Activated CD4-positive, alpha-beta memory T cell treated with anti-CD3 and anti-CD28 coated beads for 36 hours (primary cell): ENCODE measurements at regions of chr3 and their contacts with region 1.

Region 1: GRCh38 chr3:45938864-45939263 is 4.4 kb upstream of the CXCR6 start:
- DNase-seq: peak; percentile 91
- H3K4me3 Mint-ChIP-seq: no peak overlapping the region
- H3K27ac Mint-ChIP-seq: no peak overlapping the region
- H3K4me1 Mint-ChIP-seq: peaks cover 34% of the 10 kb centered on the region
- H3K27me3 Mint-ChIP-seq: peaks cover 2% of the 10 kb centered on the region

Region 2: DNA sequence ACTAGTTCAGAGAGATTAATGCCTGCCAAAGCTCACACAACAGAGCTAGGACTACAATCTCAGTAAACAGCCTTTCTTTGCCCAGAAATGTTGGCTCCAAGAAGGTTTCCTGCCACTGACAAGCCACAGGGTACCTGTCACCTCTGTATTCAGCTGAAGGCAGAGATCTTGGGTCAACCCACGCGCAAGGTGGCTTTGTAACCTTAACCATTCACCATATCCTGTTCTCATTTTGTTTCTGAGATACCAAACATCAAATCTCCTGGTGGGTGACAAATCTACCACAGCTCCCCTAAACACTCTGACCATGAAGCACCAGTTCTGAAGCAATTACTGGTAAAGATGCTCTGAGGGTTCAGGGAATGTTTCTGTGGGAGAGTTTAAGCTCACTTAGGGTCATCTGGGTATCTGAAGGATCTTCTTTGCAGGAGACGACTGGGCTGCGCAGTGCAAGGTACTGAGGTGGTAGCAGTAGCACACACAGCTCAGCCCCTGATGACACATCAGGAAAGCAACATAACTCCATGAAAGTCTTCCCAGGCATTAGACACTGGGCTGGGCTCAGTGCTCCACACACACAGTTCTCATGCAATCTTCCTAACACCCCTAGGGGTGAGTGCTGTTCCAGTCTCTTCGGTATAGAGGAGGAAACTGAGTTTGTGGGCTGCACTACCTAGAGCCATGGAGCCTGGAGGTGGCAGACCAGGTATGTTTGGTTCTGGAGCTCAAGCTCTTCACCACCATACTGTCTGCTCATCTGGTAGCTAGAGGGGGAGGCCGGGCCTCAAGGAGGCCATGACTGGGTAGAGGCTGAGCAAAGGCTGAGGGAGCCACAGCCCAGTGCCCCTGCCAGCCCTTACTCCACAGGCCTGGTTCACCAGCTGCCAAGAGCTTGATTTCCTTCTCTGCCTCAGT is 12.1 kb after region 1 on chr3:
- CTCF ChIA-PET with region 1: interaction called, 21 read pairs
- POLR2A ChIA-PET with region 1: no interaction called
- intact Hi-C with region 1: no loop called
- DNase-seq: peak; percentile 85
- H3K4me3 Mint-ChIP-seq: no peak overlapping the region
- H3K27ac Mint-ChIP-seq: peak overlapping the region; percentile 77
- H3K4me1 Mint-ChIP-seq: peaks cover 50% of the 10 kb centered on the region
- H3K27me3 Mint-ChIP-seq: peaks cover under 1% of the 10 kb centered on the region

Region 3: DNA sequence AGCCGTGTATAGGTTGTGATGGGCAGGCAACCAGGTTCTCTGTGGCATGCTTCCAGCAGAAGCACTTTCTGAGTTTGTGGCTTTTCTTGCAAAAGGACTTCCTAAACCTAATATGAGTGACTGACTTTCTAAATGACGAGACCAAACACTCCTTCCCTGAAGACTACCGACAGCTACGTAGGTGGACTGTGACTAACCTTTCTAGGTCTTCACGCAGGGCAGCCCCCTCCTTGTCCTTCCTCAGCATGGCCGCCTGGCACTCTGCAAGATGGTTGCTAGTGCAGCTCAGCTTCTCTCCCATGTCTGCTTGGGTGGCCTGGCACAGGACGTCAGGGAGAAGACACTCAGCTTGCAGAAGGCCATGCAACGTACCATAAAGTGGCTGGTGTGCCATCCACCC is 25.3 kb after region 1 on chr3:
- CTCF ChIA-PET with region 1: interaction called, 49 read pairs
- POLR2A ChIA-PET with region 1: interaction called, 10 read pairs
- intact Hi-C with region 1: loop called (anchors 1 kb)
- DNase-seq: peak; percentile 84
- H3K4me3 Mint-ChIP-seq: no peak overlapping the region
- H3K27ac Mint-ChIP-seq: peak overlapping the region; percentile 77
- H3K4me1 Mint-ChIP-seq: peaks cover 72% of the 10 kb centered on the region
- H3K27me3 Mint-ChIP-seq: no peaks in the 10 kb centered on the region

Region 4: GRCh38 chr3:45978006-45978761 is 39.3 kb after region 1 on chr3:
- CTCF ChIA-PET with region 1: interaction called, 14 read pairs
- POLR2A ChIA-PET with region 1: interaction called, 5 read pairs
- intact Hi-C with region 1: loop called (anchors 2 kb)
- DNase-seq: peak; percentile 87
- H3K4me3 Mint-ChIP-seq: peak overlapping the region; percentile 39
- H3K27ac Mint-ChIP-seq: peak overlapping the region; percentile 87
- H3K4me1 Mint-ChIP-seq: peaks cover 84% of the 10 kb centered on the region
- H3K27me3 Mint-ChIP-seq: no peaks in the 10 kb centered on the region

Region 5: GRCh38 chr3:46070595-46071093 is 131.8 kb after region 1 on chr3:
- CTCF ChIA-PET with region 1: interaction called, 445 read pairs
- POLR2A ChIA-PET with region 1: interaction called, 3 read pairs
- intact Hi-C with region 1: no loop called
- DNase-seq: no peak
- H3K4me3 Mint-ChIP-seq: no peak overlapping the region
- H3K27ac Mint-ChIP-seq: peak overlapping the region; percentile 18
- H3K4me1 Mint-ChIP-seq: peaks cover 55% of the 10 kb centered on the region
- H3K27me3 Mint-ChIP-seq: peaks cover 27% of the 10 kb centered on the region

Region 6: DNA sequence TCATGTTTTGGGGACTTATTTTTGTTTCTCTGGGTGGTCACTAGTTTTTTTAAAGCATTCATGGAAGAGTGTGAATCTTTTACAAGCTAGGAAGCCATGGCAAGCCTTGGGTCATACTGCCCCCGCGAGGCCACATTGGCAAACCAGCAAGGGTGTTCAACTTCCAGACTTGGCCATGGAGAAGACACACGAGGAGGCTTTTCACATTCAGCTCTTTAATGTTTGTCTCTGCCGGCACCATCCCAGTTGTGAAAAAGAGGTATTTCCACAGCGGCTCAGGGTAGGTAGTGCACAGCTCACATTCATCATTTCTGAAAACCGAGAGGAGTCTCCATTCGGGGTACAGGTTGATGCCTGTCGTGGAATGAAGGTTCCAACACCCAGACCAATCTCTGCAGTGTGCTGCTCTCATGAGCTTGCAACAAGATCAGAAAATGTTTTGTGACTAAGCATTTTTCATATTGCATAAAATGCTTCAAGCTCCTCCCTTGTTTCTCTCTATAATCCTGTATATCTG is 439.6 kb after region 1 on chr3:
- CTCF ChIA-PET with region 1: interaction called, 43 read pairs
- POLR2A ChIA-PET with region 1: no interaction called
- intact Hi-C with region 1: loop called (anchors 2 kb)
- DNase-seq: peak; percentile 79
- H3K4me3 Mint-ChIP-seq: no peak overlapping the region
- H3K27ac Mint-ChIP-seq: no peak overlapping the region
- H3K4me1 Mint-ChIP-seq: peaks cover 36% of the 10 kb centered on the region
- H3K27me3 Mint-ChIP-seq: peaks cover 13% of the 10 kb centered on the region